ENCODE measurements at regions of chr10 and their contacts with region 1.

Region 1: GRCh38 chr10:101840741-101841453 is 2.7 kb downstream of the KCNIP2 start:
- DNase-seq: peak; percentile 90
- H3K4me3 ChIP-seq: peak overlapping the region; percentile 40
- H3K27ac ChIP-seq: no peak overlapping the region
- H3K4me1 ChIP-seq: peaks cover 9% of the 10 kb centered on the region
- H3K27me3 ChIP-seq: no peaks in the 10 kb centered on the region
- CTCF ChIP-seq: peak; percentile 99

Region 2: DNA sequence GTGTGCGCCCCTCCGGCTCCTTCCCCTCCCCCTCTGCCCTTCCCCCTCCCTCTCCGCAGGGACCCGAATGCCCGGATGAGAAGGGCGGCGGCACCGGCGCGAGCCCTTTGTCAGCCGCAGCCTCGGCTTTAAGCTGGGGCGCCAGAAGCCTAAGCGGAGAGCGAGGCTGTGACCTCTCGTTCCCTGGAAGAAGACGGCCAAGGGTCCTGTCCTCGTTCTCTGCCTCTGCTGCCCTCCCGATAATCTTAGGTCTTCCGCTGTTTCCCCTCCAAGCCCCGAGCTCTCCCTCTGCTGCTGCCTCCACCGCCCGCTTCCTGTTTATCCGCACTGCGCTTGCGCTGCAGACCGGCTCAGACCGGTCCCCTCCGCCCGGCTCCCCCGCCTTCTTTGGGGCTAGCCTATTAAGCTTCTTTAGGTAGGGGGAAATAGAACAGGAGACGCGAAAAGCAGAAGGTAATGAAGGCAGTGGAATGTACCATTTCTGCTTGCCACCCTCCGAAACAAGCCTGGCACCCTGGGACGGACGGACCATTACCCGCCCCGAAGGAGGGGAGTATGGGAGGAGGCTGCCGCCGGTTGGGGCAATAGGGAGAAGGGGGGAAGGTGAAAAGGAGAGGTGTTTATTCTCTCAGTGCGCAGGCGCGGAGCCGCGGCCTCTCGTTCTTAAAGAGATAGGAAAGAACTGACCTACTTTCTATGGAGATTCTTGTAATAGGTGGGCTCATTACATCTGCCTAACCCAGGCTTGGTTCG is 22.6 kb before region 1 on chr10 and contains the start of gene OGA:
- CTCF ChIA-PET with region 1: interaction called, 17 read pairs
- POLR2A ChIA-PET with region 1: no interaction called
- intact Hi-C with region 1: no loop called
- DNase-seq: peak; percentile 100
- H3K4me3 ChIP-seq: peak within 1 kb of the TSS; percentile 98
- H3K27ac ChIP-seq: peak within 1 kb of the TSS; percentile 88
- H3K4me1 ChIP-seq: peaks cover 10% of the 10 kb centered on the region
- H3K27me3 ChIP-seq: no peaks in the 10 kb centered on the region
- CTCF ChIP-seq: no peak
- total RNA-seq, gene OGA: 109 and 114 TPM in 2 replicates

Region 3: DNA sequence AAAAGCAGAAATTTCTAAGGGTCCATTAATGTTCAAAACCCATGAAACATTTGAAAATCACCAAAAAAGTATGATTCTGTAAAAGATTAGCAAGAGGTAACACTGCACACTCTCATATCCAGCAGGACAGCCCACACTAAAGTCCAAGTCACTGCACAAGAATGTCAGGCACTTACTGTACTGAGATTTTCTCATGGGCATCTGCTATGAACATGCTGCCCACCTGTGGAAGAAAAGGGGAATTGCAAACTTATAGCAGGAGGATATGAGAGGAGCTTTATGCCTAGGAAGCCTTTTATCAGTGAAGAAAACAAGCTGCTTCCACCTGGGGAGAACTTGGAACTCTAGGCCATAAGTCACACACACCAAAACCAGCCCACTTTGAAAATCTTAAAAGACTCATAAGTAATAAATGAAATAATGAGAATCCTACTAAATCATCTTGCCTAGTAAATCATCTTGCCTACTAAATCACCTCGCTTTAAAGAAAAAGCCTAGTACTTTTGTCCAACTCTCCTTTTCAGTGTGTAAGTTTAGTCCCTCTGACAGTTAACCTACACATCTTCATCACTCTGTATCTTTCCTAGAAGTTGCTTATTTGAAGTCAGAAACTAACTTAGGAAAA is 169.0 kb after region 1 on chr10:
- CTCF ChIA-PET with region 1: interaction called, 71 read pairs
- POLR2A ChIA-PET with region 1: no interaction called
- intact Hi-C with region 1: loop called (anchors 1 kb)
- DNase-seq: peak; percentile 88
- H3K4me3 ChIP-seq: no peak overlapping the region
- H3K27ac ChIP-seq: no peak overlapping the region
- H3K4me1 ChIP-seq: no peaks in the 10 kb centered on the region
- H3K27me3 ChIP-seq: no peaks in the 10 kb centered on the region
- CTCF ChIP-seq: peak; percentile 89

Region 4: GRCh38 chr10:102090772-102091171 is 249.9 kb after region 1 on chr10:
- CTCF ChIA-PET with region 1: interaction called, 11 read pairs
- POLR2A ChIA-PET with region 1: no interaction called
- intact Hi-C with region 1: no loop called
- DNase-seq: no peak
- H3K4me3 ChIP-seq: no peak overlapping the region
- H3K27ac ChIP-seq: no peak overlapping the region
- H3K4me1 ChIP-seq: no peaks in the 10 kb centered on the region
- H3K27me3 ChIP-seq: no peaks in the 10 kb centered on the region
- CTCF ChIP-seq: no peak